Mammary epithelial cell (primary cell): ENCODE measurements at regions of chr5 and their contacts with region 1.

Region 1: DNA sequence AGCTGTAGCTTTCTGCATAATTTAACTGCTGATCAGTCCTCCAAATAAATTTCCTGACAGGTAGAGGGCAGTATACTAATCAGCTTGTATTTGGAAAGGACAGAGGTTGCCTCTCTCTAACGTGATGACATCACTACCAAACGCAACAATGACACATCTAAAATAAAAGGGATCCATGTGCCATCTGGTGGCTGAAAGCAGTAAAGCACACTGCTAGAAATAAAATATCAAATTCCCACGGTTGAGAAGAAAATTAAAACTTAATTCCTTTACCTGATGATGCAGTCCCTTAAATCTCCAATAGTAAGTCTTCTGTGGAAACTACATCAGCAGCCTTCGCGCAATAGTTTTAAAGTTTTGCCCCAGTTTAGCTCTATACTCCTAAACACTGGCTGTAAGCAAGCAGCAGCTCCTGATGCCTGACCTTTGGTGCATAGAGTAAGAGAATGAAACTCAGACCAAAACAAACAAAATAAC is 54.5 kb downstream of the DIAPH1 start:
- DNase-seq: peak; percentile 85
- H3K4me3 ChIP-seq: no peak overlapping the region
- H3K27ac ChIP-seq: peak overlapping the region; percentile 68
- H3K4me1 ChIP-seq: peaks cover 14% of the 10 kb centered on the region
- H3K27me3 ChIP-seq: no peaks in the 10 kb centered on the region
- CTCF ChIP-seq: peak; percentile 82 to 99

Region 2: GRCh38 chr5:141084487-141084990 is 479.7 kb before region 1 on chr5:
- CTCF ChIA-PET with region 1: no interaction called
- dilution Hi-C with region 1: no loop called
- in situ Hi-C with region 1: loop called in 1 of 2 experiments (anchors 10 kb)
- intact Hi-C with region 1: no loop called
- DNase-seq: peak; percentile 48
- H3K4me3 ChIP-seq: peak overlapping the region; percentile 44 to 83 (median 50)
- H3K27ac ChIP-seq: no peak overlapping the region
- H3K4me1 ChIP-seq: no peaks in the 10 kb centered on the region
- H3K27me3 ChIP-seq: no peaks in the 10 kb centered on the region
- CTCF ChIP-seq: peak; percentile 66 to 77

Region 3: GRCh38 chr5:141320225-141321169 is 243.8 kb before region 1 on chr5 and contains the start of gene TAF7:
- CTCF ChIA-PET with region 1: interaction called, 3 read pairs
- dilution Hi-C with region 1: no loop called
- in situ Hi-C with region 1: loop called in 1 of 2 experiments (anchors 10 kb)
- intact Hi-C with region 1: no loop called
- DNase-seq: peak; percentile 87
- H3K4me3 ChIP-seq: peak within 1 kb of the TSS; percentile 65 to 91 (median 73)
- H3K27ac ChIP-seq: peak within 1 kb of the TSS; percentile 82
- H3K4me1 ChIP-seq: peaks cover 8% of the 10 kb centered on the region
- H3K27me3 ChIP-seq: no peaks in the 10 kb centered on the region
- CTCF ChIP-seq: peak; percentile 87 to 91
- total RNA-seq, gene TAF7: 45.2 to 46.0 TPM

Region 4: DNA sequence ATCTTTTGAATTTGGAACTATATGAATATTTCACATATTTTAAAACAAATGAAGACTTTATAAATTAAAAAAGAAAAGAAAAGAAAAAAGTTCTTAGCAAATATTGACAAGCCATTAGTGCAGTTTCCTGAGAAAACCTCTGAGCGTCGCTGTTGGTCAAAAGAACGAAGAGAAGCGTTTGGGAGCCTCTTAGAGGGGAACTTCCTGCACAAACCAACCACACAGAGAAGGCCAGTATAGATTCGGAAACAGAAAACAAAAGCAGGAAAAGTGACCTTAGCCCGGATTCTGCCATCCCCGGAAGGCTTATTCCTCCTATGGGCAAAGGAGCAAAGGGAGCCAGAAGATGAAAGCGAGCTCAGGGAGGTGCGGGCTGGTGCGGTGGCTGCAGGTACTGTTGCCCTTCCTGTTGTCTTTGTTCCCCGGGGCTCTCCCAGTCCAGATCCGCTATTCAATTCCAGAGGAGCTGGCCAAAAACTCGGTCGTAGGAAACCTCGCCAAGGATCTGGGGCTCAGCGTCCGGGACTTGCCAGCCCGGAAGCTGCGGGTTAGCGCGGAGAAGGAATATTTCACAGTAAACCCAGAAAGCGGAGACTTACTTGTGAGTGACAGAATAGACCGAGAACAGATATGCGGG is 204.3 kb before region 1 on chr5 and contains the start of gene PCDHGB2:
- CTCF ChIA-PET with region 1: no interaction called
- dilution Hi-C with region 1: no loop called
- in situ Hi-C with region 1: no loop called
- intact Hi-C with region 1: loop called (anchors 5 kb)
- DNase-seq: no peak
- H3K4me3 ChIP-seq: peak within 1 kb of the TSS in 2 of 3 experiments; percentile 13
- H3K27ac ChIP-seq: no peak within 1 kb of the TSS
- H3K4me1 ChIP-seq: peaks cover 5% of the 10 kb centered on the region
- H3K27me3 ChIP-seq: peaks cover 6% of the 10 kb centered on the region
- CTCF ChIP-seq: peak; percentile 31 to 42
- total RNA-seq, gene PCDHGB2: 1.7 TPM

Region 5: GRCh38 chr5:141387233-141387949 is 176.9 kb before region 1 on chr5 and contains the start of gene PCDHGB4:
- CTCF ChIA-PET with region 1: interaction called, 3 read pairs
- dilution Hi-C with region 1: no loop called
- in situ Hi-C with region 1: loop called (anchors 10 kb)
- intact Hi-C with region 1: loop called (anchors 1 kb)
- DNase-seq: peak; percentile 47
- H3K4me3 ChIP-seq: peak within 1 kb of the TSS in 2 of 3 experiments; percentile 9 to 31
- H3K27ac ChIP-seq: no peak within 1 kb of the TSS
- H3K4me1 ChIP-seq: no peaks in the 10 kb centered on the region
- H3K27me3 ChIP-seq: peaks cover 1% of the 10 kb centered on the region
- CTCF ChIP-seq: peak; percentile 35 to 49
- total RNA-seq, gene PCDHGB4: 5.7 to 10.5 TPM

Region 6: GRCh38 chr5:141398608-141399007 is 165.6 kb before region 1 on chr5:
- CTCF ChIA-PET with region 1: no interaction called
- dilution Hi-C with region 1: no loop called
- in situ Hi-C with region 1: loop called in 1 of 2 experiments (anchors 10 kb)
- intact Hi-C with region 1: loop called (anchors 5 kb)
- DNase-seq: no peak
- H3K4me3 ChIP-seq: no peak overlapping the region
- H3K27ac ChIP-seq: no peak overlapping the region
- H3K4me1 ChIP-seq: no peaks in the 10 kb centered on the region
- H3K27me3 ChIP-seq: no peaks in the 10 kb centered on the region
- CTCF ChIP-seq: peak in 1 of 2 donors; percentile 12

Region 7: DNA sequence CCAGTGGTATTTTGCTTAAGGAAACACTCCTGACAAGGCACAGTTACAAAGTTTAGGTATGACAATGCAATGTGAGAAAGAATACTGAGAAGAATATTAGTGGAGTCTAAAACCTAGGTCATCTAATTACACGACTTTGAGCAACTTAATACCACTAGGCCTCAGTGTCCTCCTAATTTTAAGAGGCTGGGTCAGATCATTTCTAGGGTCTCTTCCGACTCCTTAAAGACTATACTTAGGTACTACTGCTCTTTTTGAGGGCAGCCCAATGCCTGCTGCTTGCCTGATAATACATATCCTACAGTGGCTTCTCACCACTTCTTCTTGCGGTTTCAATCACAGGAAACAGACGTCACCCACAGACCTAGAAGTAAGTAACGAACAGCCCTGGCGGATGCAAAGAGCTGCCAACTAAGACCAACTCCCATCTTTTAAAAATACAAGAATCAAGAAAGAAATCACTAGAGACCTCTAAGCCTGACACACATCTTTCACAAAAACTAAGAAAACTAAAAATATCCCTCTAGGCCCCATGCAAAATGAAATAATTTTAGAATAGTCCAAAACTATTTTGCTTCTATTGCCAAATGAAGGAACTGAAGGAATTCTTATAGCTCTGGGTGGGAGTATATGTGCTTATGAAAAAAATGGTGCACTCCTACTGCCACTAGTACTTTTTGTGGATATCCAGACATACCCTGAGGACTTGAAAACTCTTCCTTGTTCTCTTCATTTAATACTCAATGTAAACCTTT is 41.4 kb after region 1 on chr5:
- CTCF ChIA-PET with region 1: no interaction called
- dilution Hi-C with region 1: no loop called
- in situ Hi-C with region 1: no loop called
- intact Hi-C with region 1: no loop called
- DNase-seq: no peak
- H3K4me3 ChIP-seq: no peak overlapping the region
- H3K27ac ChIP-seq: peak overlapping the region; percentile 98
- H3K4me1 ChIP-seq: peaks cover 14% of the 10 kb centered on the region
- H3K27me3 ChIP-seq: no peaks in the 10 kb centered on the region
- CTCF ChIP-seq: no peak